PC-9 (cell line): ENCODE measurements at regions of chr7 and their contacts with region 1.

Region 1: DNA sequence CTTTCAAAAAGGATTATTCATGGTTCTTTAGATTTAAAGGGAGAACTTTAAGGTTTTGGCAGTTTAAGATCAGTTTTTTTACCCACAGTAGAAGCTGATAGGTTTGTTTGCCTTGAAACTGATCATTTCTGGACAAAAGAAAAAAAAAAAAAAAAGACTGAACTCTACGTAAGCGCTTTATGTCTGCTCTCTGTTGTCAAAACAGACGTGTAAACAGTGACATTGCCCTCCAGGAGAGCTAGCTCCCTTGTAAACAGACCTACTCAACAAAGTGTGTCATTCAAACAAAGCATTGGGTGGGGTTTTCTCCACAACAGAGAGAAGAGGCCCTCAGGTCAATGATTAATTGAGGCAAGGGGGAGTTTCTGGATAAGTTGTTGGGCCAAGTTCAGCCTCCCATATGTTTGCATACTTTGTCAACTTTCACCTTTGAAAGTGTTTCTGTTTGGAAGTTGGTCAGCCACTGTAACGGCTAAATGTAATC is 568.1 kb upstream of the LRRN3 start:
- DNase-seq: peak; percentile 28 to 94
- H3K4me3 ChIP-seq: no peak overlapping the region; the same call in 1 of the 2 replicates
- H3K27ac ChIP-seq: peak overlapping the region; percentile 57
- H3K4me1 ChIP-seq: peaks cover 11% of the 10 kb centered on the region
- H3K27me3 ChIP-seq: no peaks in the 10 kb centered on the region
- CTCF ChIP-seq: no peak

Region 2: GRCh38 chr7:111126987-111127386 is 604.2 kb after region 1 on chr7:
- CTCF ChIA-PET with region 1: no interaction called
- POLR2A ChIA-PET with region 1: interaction called, 19 read pairs
- intact Hi-C with region 1: no loop called
- DNase-seq: no peak
- H3K4me3 ChIP-seq: no peak overlapping the region
- H3K27ac ChIP-seq: no peak overlapping the region
- H3K4me1 ChIP-seq: no peaks in the 10 kb centered on the region
- H3K27me3 ChIP-seq: no peaks in the 10 kb centered on the region
- CTCF ChIP-seq: no peak